ENCODE measurements at regions of chr19 and their contacts with region 1.

Region 1: DNA sequence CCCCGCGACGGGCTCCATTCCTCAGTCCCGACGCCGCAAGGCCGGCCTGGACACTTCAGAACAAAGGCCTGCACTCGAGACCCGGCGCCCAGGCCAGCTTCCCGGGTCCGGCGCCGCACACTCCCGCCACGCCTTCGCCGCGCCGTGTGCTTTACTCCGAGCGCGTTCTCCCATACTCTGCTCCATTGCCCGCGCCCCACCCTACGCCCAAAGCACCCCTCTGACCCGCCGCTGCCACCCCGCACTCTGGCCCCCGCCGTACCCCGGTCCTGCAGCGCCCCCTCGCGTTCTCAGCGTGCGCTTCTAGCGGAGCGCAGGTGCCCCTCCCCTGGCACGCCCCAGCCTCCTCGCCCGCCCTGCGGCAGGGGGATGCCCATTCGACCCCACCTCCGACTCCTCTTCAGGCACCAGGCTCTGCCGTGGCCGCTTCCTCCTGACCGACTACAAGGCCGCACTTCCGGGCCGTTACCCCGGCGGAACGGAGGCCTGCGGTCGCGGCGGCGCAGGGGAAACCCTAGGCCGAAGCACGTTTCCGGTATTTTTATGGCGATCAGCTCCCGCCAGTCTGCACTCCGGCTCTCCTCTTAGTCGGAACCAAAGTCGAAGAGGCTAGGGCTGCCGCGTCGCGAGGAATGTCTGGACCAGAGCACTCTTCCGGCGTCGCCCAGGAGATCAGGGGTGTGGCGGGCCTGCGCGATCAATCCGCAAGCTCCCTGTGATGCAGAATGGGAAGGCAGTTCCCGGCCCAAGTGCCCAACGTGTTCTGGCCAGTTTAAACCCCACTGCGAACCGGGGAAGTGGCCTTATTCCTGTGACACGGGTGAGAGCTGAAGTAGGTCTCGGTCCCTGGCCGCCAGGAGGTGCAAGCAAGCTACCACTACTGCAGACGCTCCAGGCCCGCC is at the start of gene ZBTB45:
- DNase-seq: peak; percentile 92
- H3K4me3 Mint-ChIP-seq: peak within 1 kb of the TSS; percentile 94
- H3K27ac Mint-ChIP-seq: peak within 1 kb of the TSS; percentile 99
- H3K4me1 Mint-ChIP-seq: peaks cover 46% of the 10 kb centered on the region
- H3K27me3 Mint-ChIP-seq: no peaks in the 10 kb centered on the region
- total RNA-seq, gene ZBTB45: 15.8 to 17.4 TPM

Region 2: DNA sequence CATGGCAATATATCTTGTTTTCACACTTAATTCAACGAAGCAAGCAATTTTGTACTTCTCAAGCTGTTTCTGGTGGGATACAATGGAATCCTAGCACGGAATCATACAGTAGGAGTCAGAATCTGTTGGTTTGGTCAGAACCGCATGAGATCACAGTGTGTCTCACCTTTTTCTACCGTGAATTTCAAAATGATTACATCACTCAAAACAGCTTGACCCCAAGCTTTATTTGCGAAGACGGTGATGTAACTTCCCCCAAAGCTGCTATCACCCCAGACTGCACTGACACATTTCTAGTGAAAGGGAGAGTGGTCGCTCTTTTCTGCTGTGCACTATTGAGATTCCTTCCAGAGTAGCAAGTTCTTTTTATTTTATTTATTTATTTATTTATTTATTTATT is 554.9 kb before region 1 on chr19:
- CTCF ChIA-PET with region 1: no interaction called
- POLR2A ChIA-PET with region 1: no interaction called
- DNase-seq: no peak
- H3K4me3 Mint-ChIP-seq: no peak overlapping the region
- H3K27ac Mint-ChIP-seq: no peak overlapping the region
- H3K4me1 Mint-ChIP-seq: no peaks in the 10 kb centered on the region
- H3K27me3 Mint-ChIP-seq: no peaks in the 10 kb centered on the region

Region 3: GRCh38 chr19:58492265-58492664 is 27.3 kb before region 1 on chr19:
- CTCF ChIA-PET with region 1: interaction called, 8 read pairs
- POLR2A ChIA-PET with region 1: interaction called, 19 read pairs
- DNase-seq: no peak
- H3K4me3 Mint-ChIP-seq: no peak overlapping the region
- H3K27ac Mint-ChIP-seq: no peak overlapping the region
- H3K4me1 Mint-ChIP-seq: peaks cover 35% of the 10 kb centered on the region
- H3K27me3 Mint-ChIP-seq: no peaks in the 10 kb centered on the region

Region 4: DNA sequence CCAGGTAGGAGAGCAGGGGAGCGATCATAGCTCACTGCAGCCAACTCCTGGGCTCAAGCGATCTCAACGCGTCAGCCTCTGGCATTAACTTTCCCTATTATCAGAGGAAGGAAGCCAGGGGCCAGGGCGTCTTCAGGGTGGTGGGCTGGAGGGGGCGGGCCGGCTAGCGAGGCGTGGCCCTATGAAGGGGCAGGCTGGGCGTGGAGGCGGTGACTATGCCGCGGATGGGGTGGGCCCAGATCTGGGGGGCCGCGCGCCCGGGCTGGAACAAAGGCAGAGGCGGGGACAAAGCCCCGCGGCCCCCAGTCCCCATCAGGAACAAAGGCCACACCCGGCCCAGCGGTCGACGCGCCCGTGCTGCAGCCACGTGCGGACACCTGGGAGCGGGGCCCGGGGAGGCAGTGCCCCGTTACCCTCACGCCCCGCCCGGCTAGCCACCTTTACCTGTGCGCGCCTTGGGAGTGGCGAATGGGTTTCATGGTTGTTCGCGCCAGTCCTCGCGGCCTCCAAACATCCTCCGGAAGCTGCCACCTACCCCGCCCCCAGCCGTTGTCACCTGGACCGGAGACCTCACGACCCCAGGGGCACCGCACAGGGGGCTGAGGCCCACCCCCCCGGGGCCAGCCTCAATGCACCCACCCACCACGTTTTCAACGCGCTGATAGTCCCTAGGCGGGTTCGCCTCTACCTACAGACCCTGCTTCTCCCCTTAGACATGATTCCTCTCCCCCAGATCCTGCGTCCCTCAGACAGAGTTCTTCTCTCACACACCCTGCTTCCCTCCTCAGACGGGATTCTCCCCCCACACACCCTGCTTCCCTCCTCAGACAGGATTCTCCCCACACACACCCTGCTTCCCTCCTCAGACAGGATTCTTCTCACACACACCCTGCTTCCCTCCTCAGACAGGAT is 18.9 kb after region 1 on chr19:
- CTCF ChIA-PET with region 1: interaction called, 14 read pairs
- POLR2A ChIA-PET with region 1: interaction called, 57 read pairs
- DNase-seq: peak; percentile 54
- H3K4me3 Mint-ChIP-seq: peak overlapping the region; percentile 64
- H3K27ac Mint-ChIP-seq: no peak overlapping the region
- H3K4me1 Mint-ChIP-seq: peaks cover 17% of the 10 kb centered on the region
- H3K27me3 Mint-ChIP-seq: peaks cover 14% of the 10 kb centered on the region

Region 5: GRCh38 chr19:58558623-58559274 is 39.1 kb after region 1 on chr19:
- CTCF ChIA-PET with region 1: interaction called, 39 read pairs
- POLR2A ChIA-PET with region 1: interaction called, 54 read pairs
- DNase-seq: peak; percentile 100
- H3K4me3 Mint-ChIP-seq: peak overlapping the region; percentile 98
- H3K27ac Mint-ChIP-seq: peak overlapping the region; percentile 100
- H3K4me1 Mint-ChIP-seq: peaks cover 81% of the 10 kb centered on the region
- H3K27me3 Mint-ChIP-seq: no peaks in the 10 kb centered on the region

Region 6: GRCh38 chr19:58581227-58582151 is 61.9 kb after region 1 on chr19:
- CTCF ChIA-PET with region 1: interaction called, 49 read pairs
- POLR2A ChIA-PET with region 1: interaction called, 30 read pairs
- DNase-seq: peak; percentile 93
- H3K4me3 Mint-ChIP-seq: no peak overlapping the region
- H3K27ac Mint-ChIP-seq: peak overlapping the region; percentile 69
- H3K4me1 Mint-ChIP-seq: peaks cover 38% of the 10 kb centered on the region
- H3K27me3 Mint-ChIP-seq: no peaks in the 10 kb centered on the region